Head of caudate nucleus (tissue), 42 donors: ENCODE measurements at regions of chr7 and their contacts with region 1.

Region 1: GRCh38 chr7:503575-504111 is 16.0 kb downstream of the PDGFA start:
- DNase-seq: peak in 1 of 42 donors; percentile 1

Region 2: DNA sequence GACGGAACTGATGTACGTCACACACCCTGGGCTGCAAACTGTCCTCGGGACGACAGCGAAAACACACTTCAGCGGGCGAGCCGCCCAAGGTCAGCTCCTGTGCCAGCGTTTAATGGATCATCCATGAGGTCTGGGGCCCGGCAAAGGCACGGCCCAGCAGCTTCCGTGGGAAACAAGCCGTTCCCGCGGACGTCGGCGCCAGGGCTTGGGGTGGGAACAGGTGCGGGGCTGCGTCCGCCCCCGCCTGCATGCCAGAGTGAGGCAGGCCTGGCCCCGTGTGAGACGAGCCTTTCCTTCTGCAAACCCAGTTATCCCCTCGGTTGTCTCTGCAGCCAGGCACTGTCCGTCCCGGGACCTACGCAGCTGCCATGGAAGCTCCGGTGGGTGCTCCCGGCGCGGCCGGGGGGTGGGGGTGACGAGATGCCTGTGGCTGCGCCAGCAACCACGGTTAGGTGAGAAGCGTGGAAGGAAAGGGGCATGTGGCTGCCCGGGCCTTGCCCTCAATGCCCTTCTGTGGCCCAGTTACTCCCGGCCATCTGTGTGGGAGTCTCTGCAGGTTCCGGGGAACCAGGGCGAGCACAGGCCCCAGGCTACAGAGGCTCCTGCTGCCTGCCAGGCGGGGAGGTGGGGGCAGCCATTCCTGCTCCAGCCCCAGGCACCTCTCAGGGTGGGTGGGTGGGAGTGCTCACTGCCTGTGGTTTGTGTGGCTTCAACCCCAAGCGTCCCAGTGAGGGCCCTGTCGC is 58.2 kb after region 1 on chr7:
- intact Hi-C with region 1: loop called (anchors 2 kb)
- DNase-seq: no peak